MCF 10A (cell line): ENCODE measurements at regions of chr1 and their contacts with region 1.

Region 1: GRCh38 chr1:156500797-156501499 is 373 bp upstream of the MEF2D start:
- DNase-seq: peak; percentile 97
- H3K4me3 Mint-ChIP-seq: peak overlapping the region; percentile 85
- H3K27ac Mint-ChIP-seq: peak overlapping the region; percentile 97
- H3K4me1 Mint-ChIP-seq: peaks cover 68% of the 10 kb centered on the region
- H3K27me3 Mint-ChIP-seq: no peaks in the 10 kb centered on the region
- CTCF ChIP-seq: peak; percentile 72

Region 2: GRCh38 chr1:156146020-156146768 is 354.8 kb before region 1 on chr1:
- CTCF ChIA-PET with region 1: no interaction called
- POLR2A ChIA-PET with region 1: no interaction called
- intact Hi-C with region 1: no loop called
- DNase-seq: peak; percentile 97
- H3K4me3 Mint-ChIP-seq: peak overlapping the region; percentile 24
- H3K27ac Mint-ChIP-seq: no peak overlapping the region
- H3K4me1 Mint-ChIP-seq: peaks cover 29% of the 10 kb centered on the region
- H3K27me3 Mint-ChIP-seq: no peaks in the 10 kb centered on the region
- CTCF ChIP-seq: peak; percentile 60

Region 3: DNA sequence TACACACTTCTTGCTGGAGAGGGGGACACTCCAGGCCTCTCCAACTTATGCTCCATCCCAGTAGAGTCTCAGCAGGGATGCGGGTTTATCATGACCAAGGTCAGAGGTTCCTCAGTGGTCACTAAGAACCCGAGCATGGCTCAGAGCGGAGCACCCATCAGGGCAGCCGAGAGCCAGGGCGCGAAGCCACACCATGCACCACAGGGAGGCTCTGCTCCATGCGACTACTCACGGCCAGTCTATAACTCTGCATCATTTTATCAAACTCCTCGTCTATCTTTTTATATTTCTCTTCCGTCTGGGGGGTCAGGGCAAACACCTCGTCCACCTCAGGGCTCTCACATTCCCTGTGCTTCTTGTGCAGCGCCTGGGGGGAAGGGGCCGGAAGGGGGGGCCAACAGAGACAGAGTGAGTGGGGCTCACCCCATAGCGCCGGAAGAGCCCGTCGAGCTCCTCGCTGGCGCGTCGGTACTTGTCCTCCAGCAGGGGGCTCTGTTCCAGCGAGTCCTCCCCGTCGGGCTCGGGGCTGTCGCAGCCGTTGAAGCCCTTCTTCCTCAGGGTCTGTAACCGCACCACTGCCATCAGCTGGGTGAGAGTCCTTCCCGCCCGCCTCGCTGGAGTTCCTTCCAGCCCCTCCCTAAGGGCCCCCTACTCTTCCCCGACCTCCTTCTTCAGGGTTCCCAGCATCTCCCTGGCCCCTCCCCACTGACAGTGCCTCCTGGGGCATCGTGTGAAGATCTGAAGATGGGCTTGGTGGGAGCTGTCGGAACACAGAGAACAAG is 20.3 kb before region 1 on chr1:
- CTCF ChIA-PET with region 1: interaction called, 83 read pairs
- POLR2A ChIA-PET with region 1: interaction called, 33 read pairs
- intact Hi-C with region 1: no loop called
- DNase-seq: peak; percentile 33
- H3K4me3 Mint-ChIP-seq: no peak overlapping the region
- H3K27ac Mint-ChIP-seq: peak overlapping the region; percentile 82
- H3K4me1 Mint-ChIP-seq: peaks cover 31% of the 10 kb centered on the region
- H3K27me3 Mint-ChIP-seq: no peaks in the 10 kb centered on the region
- CTCF ChIP-seq: peak; percentile 53

Region 4: DNA sequence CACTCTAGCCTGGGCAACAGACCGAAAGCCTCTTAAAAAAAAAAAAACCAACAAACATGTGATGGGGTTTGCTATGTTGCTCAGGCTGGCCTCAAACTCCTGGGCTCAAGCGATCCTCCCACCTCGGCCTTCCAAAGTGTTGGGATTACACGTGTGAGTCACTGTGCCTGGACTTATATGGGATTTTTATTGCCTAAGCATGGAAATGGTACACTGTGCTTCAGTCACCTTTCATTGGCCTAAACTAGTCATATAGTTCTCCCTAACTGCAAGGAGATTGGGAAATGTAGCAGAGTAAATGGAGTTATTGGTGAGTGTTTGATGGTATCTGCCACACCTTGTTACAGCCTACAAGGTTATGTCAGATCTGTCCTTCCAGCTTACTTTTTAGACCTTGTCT is 16.8 kb after region 1 on chr1:
- CTCF ChIA-PET with region 1: interaction called, 4 read pairs
- POLR2A ChIA-PET with region 1: interaction called, 197 read pairs
- intact Hi-C with region 1: no loop called
- DNase-seq: peak; percentile 93
- H3K4me3 Mint-ChIP-seq: no peak overlapping the region
- H3K27ac Mint-ChIP-seq: peak overlapping the region; percentile 91
- H3K4me1 Mint-ChIP-seq: peaks cover 14% of the 10 kb centered on the region
- H3K27me3 Mint-ChIP-seq: no peaks in the 10 kb centered on the region
- CTCF ChIP-seq: no peak

Region 5: DNA sequence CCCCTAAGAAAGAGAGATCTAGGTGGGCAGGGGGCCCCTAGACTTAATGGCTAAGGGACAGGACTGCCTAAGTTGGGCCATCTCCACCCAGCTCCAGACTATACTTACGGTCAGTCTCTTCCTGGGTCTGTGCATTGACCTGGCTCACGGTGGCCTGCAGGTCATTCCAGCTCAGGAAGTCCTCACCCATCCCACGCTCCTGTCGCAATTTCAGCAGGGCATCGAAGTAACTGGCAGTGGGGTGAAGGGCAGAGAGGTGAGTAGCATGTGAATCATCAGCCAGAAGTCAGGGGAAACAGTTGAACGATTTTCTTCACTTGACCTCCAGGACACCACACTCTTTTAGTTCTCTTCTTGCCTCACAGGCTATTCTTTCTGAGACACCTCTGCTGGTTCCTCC is 50.9 kb after region 1 on chr1:
- CTCF ChIA-PET with region 1: interaction called, 3 read pairs
- POLR2A ChIA-PET with region 1: interaction called, 6 read pairs
- intact Hi-C with region 1: loop called (anchors 2 kb)
- DNase-seq: peak; percentile 96
- H3K4me3 Mint-ChIP-seq: no peak overlapping the region
- H3K27ac Mint-ChIP-seq: peak overlapping the region; percentile 24
- H3K4me1 Mint-ChIP-seq: peaks cover 17% of the 10 kb centered on the region
- H3K27me3 Mint-ChIP-seq: no peaks in the 10 kb centered on the region
- CTCF ChIP-seq: no peak

Region 6: GRCh38 chr1:156577550-156577949 is 76.6 kb after region 1 on chr1:
- CTCF ChIA-PET with region 1: interaction called, 12 read pairs
- POLR2A ChIA-PET with region 1: interaction called, 20 read pairs
- intact Hi-C with region 1: no loop called
- DNase-seq: no peak
- H3K4me3 Mint-ChIP-seq: no peak overlapping the region
- H3K27ac Mint-ChIP-seq: no peak overlapping the region
- H3K4me1 Mint-ChIP-seq: peaks cover 7% of the 10 kb centered on the region
- H3K27me3 Mint-ChIP-seq: peaks cover 11% of the 10 kb centered on the region
- CTCF ChIP-seq: no peak

Region 7: GRCh38 chr1:156601122-156601830 is 100.3 kb after region 1 on chr1 and contains the start of gene GPATCH4:
- CTCF ChIA-PET with region 1: interaction called, 7 read pairs
- POLR2A ChIA-PET with region 1: interaction called, 83 read pairs
- intact Hi-C with region 1: loop called (anchors 10 kb)
- DNase-seq: peak; percentile 94
- H3K4me3 Mint-ChIP-seq: peak within 1 kb of the TSS; percentile 86
- H3K27ac Mint-ChIP-seq: peak within 1 kb of the TSS; percentile 94
- H3K4me1 Mint-ChIP-seq: peaks cover 18% of the 10 kb centered on the region
- H3K27me3 Mint-ChIP-seq: no peaks in the 10 kb centered on the region
- CTCF ChIP-seq: no peak
- total RNA-seq, gene GPATCH4: 67.3 and 107 TPM in 2 replicates